PC-3 (cell line): ENCODE measurements at regions of chr1 and their contacts with region 1.

Region 1: DNA sequence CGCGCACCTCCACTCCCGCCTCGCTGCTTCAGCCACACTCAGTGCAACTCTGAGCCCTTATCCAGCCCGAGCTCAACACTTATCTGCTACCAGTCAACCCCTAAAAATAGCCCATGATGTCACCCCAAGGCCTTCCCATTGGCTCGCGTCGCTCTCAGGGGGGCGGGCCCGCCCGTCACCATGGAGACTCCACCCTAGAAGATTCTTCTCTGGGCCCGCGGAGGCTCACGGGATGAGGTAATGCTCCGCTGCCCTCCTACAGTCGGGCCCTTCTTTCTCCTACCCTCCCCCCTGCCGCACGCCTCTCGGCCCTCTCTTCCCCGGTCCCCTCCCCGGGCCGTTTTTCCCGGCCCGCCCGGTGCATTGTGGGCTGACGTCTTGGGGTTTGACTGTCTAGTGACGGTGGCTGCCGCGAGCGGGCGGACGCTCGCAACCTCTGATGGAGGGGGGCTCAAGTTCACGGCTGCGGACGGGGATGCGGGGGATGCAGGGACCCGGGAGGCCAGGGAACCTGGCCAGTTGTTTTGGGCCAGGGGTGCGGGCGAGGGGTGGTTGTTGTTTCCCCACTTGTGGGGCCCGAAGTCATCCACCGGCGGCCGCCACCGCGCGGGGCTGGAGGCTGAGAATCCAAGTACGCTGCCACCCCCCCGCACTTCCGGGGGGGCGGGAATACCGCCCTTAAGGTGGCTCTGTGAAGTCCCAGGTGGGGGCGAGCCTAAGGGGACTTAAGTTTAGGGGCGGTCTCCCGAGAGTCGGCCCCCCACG is at the start of gene JUN:
- DNase-seq: peak; percentile 99
- ATAC-seq: peak; percentile 71
- H3K4me3 ChIP-seq: peak within 1 kb of the TSS; percentile 76
- H3K27ac ChIP-seq: peak within 1 kb of the TSS; percentile 84
- H3K4me1 ChIP-seq: peaks cover 27% of the 10 kb centered on the region
- H3K27me3 ChIP-seq: no peaks in the 10 kb centered on the region
- CTCF ChIP-seq: no peak
- total RNA-seq, gene JUN: 73.6 and 95.1 TPM in 2 replicates

Region 2: GRCh38 chr1:58710190-58711085 is 73.7 kb before region 1 on chr1:
- CTCF ChIA-PET with region 1: no interaction called
- POLR2A ChIA-PET with region 1: interaction called, 14 read pairs
- intact Hi-C with region 1: no loop called
- DNase-seq: no peak
- ATAC-seq: no peak
- H3K4me3 ChIP-seq: no peak overlapping the region
- H3K27ac ChIP-seq: no peak overlapping the region
- H3K4me1 ChIP-seq: no peaks in the 10 kb centered on the region
- H3K27me3 ChIP-seq: no peaks in the 10 kb centered on the region
- CTCF ChIP-seq: no peak

Region 3: DNA sequence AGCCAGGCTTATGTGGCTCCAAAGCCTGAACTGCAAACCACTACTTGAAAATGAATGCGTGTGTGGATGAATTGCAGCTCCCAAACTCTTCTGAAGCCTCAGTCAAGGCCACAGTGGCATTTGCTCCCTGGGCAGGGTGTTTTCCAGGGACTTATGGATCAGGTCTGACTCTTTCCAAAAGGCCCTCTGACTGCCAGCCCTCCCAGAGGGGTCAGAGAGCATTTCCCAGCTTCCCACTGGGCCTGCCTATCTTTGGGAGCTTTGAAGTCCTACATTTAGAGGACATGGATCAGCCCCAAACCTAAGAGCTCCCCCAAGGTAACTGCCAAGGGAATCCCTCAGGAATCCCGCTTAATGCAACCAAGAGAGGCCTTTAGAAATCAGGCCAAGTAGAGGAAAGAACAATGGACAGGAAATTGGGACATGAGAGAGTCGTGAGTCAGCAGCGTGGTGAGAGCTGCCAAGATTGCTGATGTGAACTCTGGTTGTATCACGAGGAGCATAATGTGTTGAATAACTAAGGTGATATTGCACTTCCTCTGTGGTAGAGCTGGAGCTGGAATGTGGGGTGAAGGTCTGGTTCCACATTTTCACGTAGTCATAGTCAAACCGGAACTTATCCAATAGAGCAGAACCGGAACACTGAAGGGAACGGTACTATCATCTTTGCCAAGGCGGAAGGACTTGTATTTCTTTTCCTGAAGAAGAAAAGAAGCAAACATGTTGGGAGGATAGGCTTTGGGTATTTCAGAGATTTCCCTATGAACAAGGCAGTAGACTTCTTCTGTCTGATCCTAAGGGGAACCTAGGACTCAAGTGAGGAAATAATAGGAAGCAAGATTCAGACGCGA is 99.1 kb after region 1 on chr1:
- CTCF ChIA-PET with region 1: no interaction called
- POLR2A ChIA-PET with region 1: no interaction called
- intact Hi-C with region 1: loop called (anchors 1 kb)
- DNase-seq: peak; percentile 98
- ATAC-seq: peak; percentile 79
- H3K4me3 ChIP-seq: no peak overlapping the region
- H3K27ac ChIP-seq: peak overlapping the region; percentile 83
- H3K4me1 ChIP-seq: peaks cover 55% of the 10 kb centered on the region
- H3K27me3 ChIP-seq: no peaks in the 10 kb centered on the region
- CTCF ChIP-seq: no peak

Region 4: GRCh38 chr1:59076612-59077011 is 292.4 kb after region 1 on chr1:
- CTCF ChIA-PET with region 1: no interaction called
- POLR2A ChIA-PET with region 1: no interaction called
- intact Hi-C with region 1: loop called (anchors 1 kb)
- DNase-seq: peak; percentile 33
- ATAC-seq: peak; percentile 74
- H3K4me3 ChIP-seq: no peak overlapping the region
- H3K27ac ChIP-seq: no peak overlapping the region
- H3K4me1 ChIP-seq: no peaks in the 10 kb centered on the region
- H3K27me3 ChIP-seq: no peaks in the 10 kb centered on the region
- CTCF ChIP-seq: peak; percentile 53

Region 5: DNA sequence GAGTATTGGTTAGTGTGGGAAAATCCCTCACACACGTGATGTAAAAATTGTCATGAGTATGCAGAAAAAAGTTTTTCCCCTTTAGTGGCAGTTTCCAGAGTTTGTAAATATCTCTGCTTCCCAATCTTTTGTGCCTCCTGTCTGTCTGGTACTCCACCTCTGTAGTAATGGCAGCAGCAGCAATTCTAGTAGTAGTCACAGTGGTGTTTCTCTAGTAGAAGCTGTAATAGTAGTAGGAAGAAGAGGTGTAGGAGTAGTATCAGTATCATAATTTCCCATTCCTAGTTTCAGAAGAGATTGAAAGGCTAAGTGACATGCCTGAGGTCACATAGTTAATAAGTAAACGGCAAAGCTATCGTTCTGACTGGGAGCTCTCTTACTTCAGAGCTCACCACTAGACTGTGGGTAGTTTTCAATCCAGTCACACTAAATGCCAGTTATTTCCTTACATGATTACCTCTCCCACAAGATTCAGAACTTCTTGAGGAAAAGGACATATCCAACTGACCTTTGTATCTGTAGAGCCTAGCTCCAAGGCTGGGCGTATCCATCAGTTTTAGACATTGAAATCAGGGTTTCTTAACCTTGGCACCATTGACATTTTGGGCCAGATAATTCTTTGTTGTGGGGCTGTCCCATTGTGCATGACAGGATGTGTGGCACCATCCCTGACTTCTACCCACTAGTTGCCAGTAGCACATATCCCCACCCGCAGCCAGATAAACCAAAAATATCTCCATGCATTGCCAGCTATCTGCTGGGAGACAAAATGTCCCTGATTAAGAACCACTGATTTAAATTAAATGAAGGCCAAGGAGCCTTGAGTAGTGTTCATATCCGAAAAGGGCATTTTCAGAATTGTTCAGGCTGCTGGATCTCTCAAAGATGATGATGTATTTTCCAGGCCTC is 648.6 kb after region 1 on chr1:
- CTCF ChIA-PET with region 1: no interaction called
- POLR2A ChIA-PET with region 1: interaction called, 3 read pairs
- intact Hi-C with region 1: loop called (anchors 5 kb)
- DNase-seq: no peak
- ATAC-seq: no peak
- H3K4me3 ChIP-seq: no peak overlapping the region
- H3K27ac ChIP-seq: peak overlapping the region; percentile 84
- H3K4me1 ChIP-seq: peaks cover 54% of the 10 kb centered on the region
- H3K27me3 ChIP-seq: no peaks in the 10 kb centered on the region
- CTCF ChIP-seq: no peak

Region 6: DNA sequence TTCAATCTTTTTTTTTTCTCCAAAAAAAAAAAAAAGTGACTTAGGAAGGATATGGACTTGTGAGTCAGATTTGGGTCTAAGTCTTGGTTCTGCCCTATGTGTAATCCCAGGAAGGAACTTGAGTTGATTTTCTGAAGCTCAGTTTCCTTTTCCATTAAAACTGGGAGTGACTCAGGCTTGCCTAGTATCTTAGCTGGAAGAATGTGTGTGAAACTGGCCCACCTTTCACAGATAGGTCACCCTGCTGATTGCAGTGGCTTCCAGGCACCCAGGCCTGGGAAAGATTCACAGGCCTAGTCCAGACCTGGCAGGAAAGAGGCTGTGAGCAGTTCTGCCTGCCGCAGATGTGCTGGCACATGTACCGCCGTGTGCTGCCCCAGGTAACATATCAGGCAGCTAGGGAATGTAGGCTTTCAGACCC is 812.3 kb after region 1 on chr1:
- CTCF ChIA-PET with region 1: no interaction called
- POLR2A ChIA-PET with region 1: no interaction called
- intact Hi-C with region 1: loop called (anchors 10 kb)
- DNase-seq: peak; percentile 85
- ATAC-seq: peak; percentile 84
- H3K4me3 ChIP-seq: no peak overlapping the region
- H3K27ac ChIP-seq: peak overlapping the region; percentile 94
- H3K4me1 ChIP-seq: peaks cover 25% of the 10 kb centered on the region
- H3K27me3 ChIP-seq: no peaks in the 10 kb centered on the region
- CTCF ChIP-seq: no peak